Calu3 (cell line): ENCODE measurements at regions of chr22 and their contacts with region 1.

Region 1: DNA sequence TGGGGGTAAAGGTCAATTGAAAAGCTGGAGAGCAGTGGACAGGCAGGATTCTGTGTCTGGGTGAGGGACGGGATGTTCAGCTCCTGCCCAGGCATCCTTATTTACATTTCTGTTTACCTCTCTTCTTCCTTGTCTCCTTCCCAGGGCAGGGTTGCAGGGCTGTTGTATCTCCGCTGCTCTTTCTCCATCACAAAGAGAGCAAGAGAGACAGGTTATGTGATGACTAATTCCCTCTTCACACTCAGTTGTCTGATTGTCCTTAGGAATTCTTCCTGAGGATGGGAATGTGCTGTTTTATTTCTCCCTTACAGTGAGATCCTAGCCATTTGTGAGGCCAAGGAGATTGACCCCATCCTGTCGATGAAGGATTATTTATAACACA is 104.9 kb downstream of the VPREB1 start:
- DNase-seq: no peak
- H3K4me3 Mint-ChIP-seq: no peak overlapping the region
- H3K27ac Mint-ChIP-seq: no peak overlapping the region
- H3K4me1 Mint-ChIP-seq: no peaks in the 10 kb centered on the region
- H3K27me3 Mint-ChIP-seq: peaks cover 92% of the 10 kb centered on the region
- CTCF ChIP-seq: no peak

Region 2: DNA sequence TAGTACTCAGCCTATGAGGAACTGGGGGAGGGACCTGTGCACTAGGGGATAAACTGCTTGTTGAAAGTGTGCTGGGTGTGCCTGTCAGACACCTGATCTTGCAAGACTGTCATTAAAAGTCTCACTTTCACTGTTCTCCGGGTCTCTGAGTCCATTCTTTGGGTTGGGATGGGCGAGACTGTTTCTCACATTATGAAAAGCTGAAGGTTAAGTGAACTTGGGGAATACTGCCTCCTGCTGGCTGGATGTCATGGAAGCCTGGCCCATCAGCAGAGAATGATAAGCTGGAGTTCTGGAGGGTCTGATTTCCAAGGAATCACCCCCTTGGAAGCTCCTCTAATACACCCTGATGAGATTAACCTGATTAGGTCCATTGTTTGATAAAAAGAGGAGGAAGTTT is 113.9 kb before region 1 on chr22:
- CTCF ChIA-PET with region 1: no interaction called
- intact Hi-C with region 1: no loop called
- DNase-seq: peak; percentile 42
- H3K4me3 Mint-ChIP-seq: no peak overlapping the region
- H3K27ac Mint-ChIP-seq: no peak overlapping the region
- H3K4me1 Mint-ChIP-seq: no peaks in the 10 kb centered on the region
- H3K27me3 Mint-ChIP-seq: peaks cover 24% of the 10 kb centered on the region
- CTCF ChIP-seq: peak; percentile 45

Region 3: GRCh38 chr22:22371031-22371541 is 21.6 kb after region 1 on chr22:
- CTCF ChIA-PET with region 1: no interaction called
- intact Hi-C with region 1: no loop called
- DNase-seq: no peak
- H3K4me3 Mint-ChIP-seq: no peak overlapping the region
- H3K27ac Mint-ChIP-seq: no peak overlapping the region
- H3K4me1 Mint-ChIP-seq: no peaks in the 10 kb centered on the region
- H3K27me3 Mint-ChIP-seq: peaks cover 99% of the 10 kb centered on the region
- CTCF ChIP-seq: no peak

Region 4: GRCh38 chr22:22397277-22397870 is 47.9 kb after region 1 on chr22:
- CTCF ChIA-PET with region 1: interaction called, 4 read pairs
- intact Hi-C with region 1: loop called (anchors 1 kb)
- DNase-seq: peak; percentile 35
- H3K4me3 Mint-ChIP-seq: no peak overlapping the region
- H3K27ac Mint-ChIP-seq: no peak overlapping the region
- H3K4me1 Mint-ChIP-seq: peaks cover 16% of the 10 kb centered on the region
- H3K27me3 Mint-ChIP-seq: peaks cover 73% of the 10 kb centered on the region
- CTCF ChIP-seq: no peak

Region 5: GRCh38 chr22:22408731-22409696 is 59.6 kb after region 1 on chr22:
- CTCF ChIA-PET with region 1: no interaction called
- intact Hi-C with region 1: no loop called
- DNase-seq: peak; percentile 42
- H3K4me3 Mint-ChIP-seq: no peak overlapping the region
- H3K27ac Mint-ChIP-seq: no peak overlapping the region
- H3K4me1 Mint-ChIP-seq: no peaks in the 10 kb centered on the region
- H3K27me3 Mint-ChIP-seq: peaks cover 89% of the 10 kb centered on the region
- CTCF ChIP-seq: no peak